ENCODE measurements at regions of chr3 and their contacts with region 1.

Region 1: GRCh38 chr3:52291508-52292181 is 4.0 kb downstream of the GLYCTK start:
- DNase-seq: no peak
- ATAC-seq: no peak
- H3K4me3 ChIP-seq: peak overlapping the region; percentile 78 to 97 (median 85); a peak in 5 of 6 replicates
- H3K27ac ChIP-seq: no peak overlapping the region
- H3K4me1 ChIP-seq: peaks cover 42% of the 10 kb centered on the region
- H3K27me3 ChIP-seq: no peaks in the 10 kb centered on the region; a peak in 1 of 5 replicates
- CTCF ChIP-seq: peak; percentile 93
- EP300 ChIP-seq: no peak
- POLR2A ChIP-seq: no peak
- RAD21 ChIP-seq: peak; percentile 86

Region 2: DNA sequence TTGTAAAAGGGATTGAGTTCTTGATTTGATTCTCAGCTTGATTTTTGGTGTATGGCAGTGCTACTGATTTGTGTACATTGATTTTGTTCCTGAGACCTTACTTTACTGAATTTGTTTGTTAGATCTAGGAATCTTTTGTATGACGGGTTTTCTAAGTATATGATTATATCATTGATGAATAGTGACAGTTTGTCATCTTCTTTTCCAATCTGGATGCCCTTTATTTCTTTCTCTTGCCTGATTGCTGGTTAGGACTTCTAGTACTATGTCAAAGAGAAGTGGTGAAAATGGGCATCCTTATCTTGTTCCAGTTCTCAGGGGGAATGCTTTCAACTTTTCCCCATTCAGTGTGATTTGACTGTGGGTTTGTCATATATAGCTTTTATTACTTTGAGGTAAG is 1514.0 kb before region 1 on chr3:
- CTCF ChIA-PET with region 1: no interaction called
- POLR2A ChIA-PET with region 1: no interaction called
- in situ Hi-C with region 1: no loop called
- intact Hi-C with region 1: no loop called
- DNase-seq: no peak
- ATAC-seq: no peak
- H3K4me3 ChIP-seq: no peak overlapping the region
- H3K27ac ChIP-seq: no peak overlapping the region
- H3K4me1 ChIP-seq: no peaks in the 10 kb centered on the region
- H3K27me3 ChIP-seq: no peaks in the 10 kb centered on the region; a peak in 1 of 5 replicates
- CTCF ChIP-seq: no peak
- EP300 ChIP-seq: no peak
- POLR2A ChIP-seq: no peak
- RAD21 ChIP-seq: no peak

Region 3: GRCh38 chr3:51941798-51942602 is 349.6 kb before region 1 on chr3 and contains the starts of genes PARP3 and RRP9:
- CTCF ChIA-PET with region 1: no interaction called
- POLR2A ChIA-PET with region 1: no interaction called
- in situ Hi-C with region 1: no loop called
- intact Hi-C with region 1: no loop called
- DNase-seq: peak; percentile 99
- ATAC-seq: peak; percentile 88
- H3K4me3 ChIP-seq: peak within 1 kb of the TSS; percentile 80 to 88 (median 84)
- H3K27ac ChIP-seq: peak within 1 kb of the TSS; percentile 93
- H3K4me1 ChIP-seq: peaks cover 33% of the 10 kb centered on the region
- H3K27me3 ChIP-seq: no peaks in the 10 kb centered on the region; a peak in 1 of 5 replicates
- CTCF ChIP-seq: peak; percentile 100
- EP300 ChIP-seq: peak in 1 of 2 experiments; percentile 20; a peak in 1 of 4 replicates
- POLR2A ChIP-seq: peak in 1 of 2 experiments; percentile 45; a peak in 1 of 4 replicates
- RAD21 ChIP-seq: peak; percentile 99
- total RNA-seq, gene PARP3: 7.7 and 11.2 TPM in 2 replicates
- total RNA-seq, gene RRP9: 39.4 and 44.0 TPM in 2 replicates

Region 4: GRCh38 chr3:52220380-52221026 is 71.1 kb before region 1 on chr3:
- CTCF ChIA-PET with region 1: no interaction called
- POLR2A ChIA-PET with region 1: interaction called, 10 read pairs
- in situ Hi-C with region 1: no loop called
- intact Hi-C with region 1: loop called (anchors 2 kb)
- DNase-seq: peak; percentile 49
- ATAC-seq: peak; percentile 78
- H3K4me3 ChIP-seq: peak overlapping the region in 1 of 3 experiments; percentile 6; a peak in 1 of 6 replicates
- H3K27ac ChIP-seq: no peak overlapping the region
- H3K4me1 ChIP-seq: peaks cover 45% of the 10 kb centered on the region
- H3K27me3 ChIP-seq: peaks cover 1 to 12% of the 10 kb centered on the region in 2 experiments; a peak in 4 of 5 replicates
- CTCF ChIP-seq: peak; percentile 94
- EP300 ChIP-seq: no peak
- POLR2A ChIP-seq: no peak
- RAD21 ChIP-seq: peak; percentile 73

Region 5: DNA sequence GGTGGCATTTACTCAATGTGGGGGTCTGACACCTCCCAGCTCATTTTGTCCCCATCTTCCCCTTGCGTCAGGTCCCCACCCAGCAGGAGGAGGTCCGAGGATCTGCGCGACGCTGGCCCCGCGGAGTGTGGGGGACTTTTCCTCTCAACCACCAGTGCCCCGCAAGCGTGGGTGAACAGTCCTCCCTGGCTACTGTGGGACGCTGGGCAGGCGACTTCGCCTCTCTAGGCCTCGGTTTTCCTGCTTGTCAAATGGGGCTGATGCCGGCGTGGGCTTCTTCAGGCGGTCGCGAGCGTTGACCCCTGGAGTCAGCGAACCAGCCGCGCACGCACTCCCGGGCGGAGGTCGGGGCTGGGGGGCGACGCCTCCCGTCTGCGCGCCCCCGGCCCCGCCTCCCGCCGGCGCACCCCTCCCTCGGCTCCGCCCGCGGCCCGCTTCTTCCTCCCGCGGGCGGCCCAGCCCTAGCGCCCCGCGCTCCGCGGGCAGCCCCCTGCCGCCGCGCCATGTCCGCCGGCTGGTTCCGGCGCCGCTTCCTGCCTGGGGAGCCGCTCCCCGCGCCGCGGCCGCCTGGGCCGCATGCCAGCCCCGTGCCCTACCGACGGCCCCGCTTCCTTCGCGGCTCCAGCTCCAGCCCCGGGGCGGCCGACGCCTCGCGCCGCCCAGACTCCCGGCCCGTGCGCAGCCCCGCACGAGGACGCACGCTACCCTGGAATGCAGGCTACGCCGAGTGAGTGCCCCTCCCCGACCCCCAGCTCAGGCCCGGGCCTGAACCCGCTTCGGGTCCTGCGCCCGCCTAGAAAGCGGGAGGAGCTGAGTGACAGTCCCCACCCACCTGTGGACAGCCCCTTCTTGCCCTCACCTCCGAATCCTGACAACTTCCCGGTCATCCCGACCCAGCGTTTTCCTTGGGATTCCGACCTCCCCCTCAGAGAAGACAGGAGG is 46.1 kb before region 1 on chr3 and contains the start of gene PPM1M:
- CTCF ChIA-PET with region 1: no interaction called
- POLR2A ChIA-PET with region 1: interaction called, 18 read pairs
- in situ Hi-C with region 1: no loop called
- intact Hi-C with region 1: no loop called
- DNase-seq: no peak
- ATAC-seq: peak; percentile 41
- H3K4me3 ChIP-seq: peak within 1 kb of the TSS; percentile 44 to 62 (median 49); a peak in 5 of 6 replicates
- H3K27ac ChIP-seq: no peak within 1 kb of the TSS
- H3K4me1 ChIP-seq: peaks cover 42% of the 10 kb centered on the region
- H3K27me3 ChIP-seq: no peaks in the 10 kb centered on the region
- CTCF ChIP-seq: no peak
- EP300 ChIP-seq: no peak
- POLR2A ChIP-seq: no peak
- RAD21 ChIP-seq: no peak
- total RNA-seq, gene PPM1M: 1.5 and 2.5 TPM in 2 replicates

Region 6: GRCh38 chr3:52262447-52262846 is 29.2 kb before region 1 on chr3:
- CTCF ChIA-PET with region 1: no interaction called
- POLR2A ChIA-PET with region 1: no interaction called
- in situ Hi-C with region 1: no loop called
- intact Hi-C with region 1: no loop called
- DNase-seq: no peak
- ATAC-seq: no peak
- H3K4me3 ChIP-seq: no peak overlapping the region
- H3K27ac ChIP-seq: no peak overlapping the region
- H3K4me1 ChIP-seq: no peaks in the 10 kb centered on the region
- H3K27me3 ChIP-seq: no peaks in the 10 kb centered on the region
- CTCF ChIP-seq: no peak
- EP300 ChIP-seq: no peak
- POLR2A ChIP-seq: no peak
- RAD21 ChIP-seq: no peak

Region 7: GRCh38 chr3:52278510-52279069 is 13.1 kb before region 1 on chr3 and contains the start of gene WDR82:
- CTCF ChIA-PET with region 1: no interaction called
- POLR2A ChIA-PET with region 1: interaction called, 165 read pairs
- in situ Hi-C with region 1: no loop called
- intact Hi-C with region 1: no loop called
- DNase-seq: peak; percentile 78
- ATAC-seq: peak; percentile 89
- H3K4me3 ChIP-seq: peak within 1 kb of the TSS; percentile 77 to 99 (median 94)
- H3K27ac ChIP-seq: peak within 1 kb of the TSS; percentile 95
- H3K4me1 ChIP-seq: peaks cover 74% of the 10 kb centered on the region
- H3K27me3 ChIP-seq: no peaks in the 10 kb centered on the region; a peak in 1 of 5 replicates
- CTCF ChIP-seq: peak; percentile 65
- EP300 ChIP-seq: no peak
- POLR2A ChIP-seq: peak; percentile 84 to 93
- RAD21 ChIP-seq: peak; percentile 9; the same call in 1 of the 2 replicates
- total RNA-seq, gene WDR82: 59.5 and 62.0 TPM in 2 replicates

Region 8: DNA sequence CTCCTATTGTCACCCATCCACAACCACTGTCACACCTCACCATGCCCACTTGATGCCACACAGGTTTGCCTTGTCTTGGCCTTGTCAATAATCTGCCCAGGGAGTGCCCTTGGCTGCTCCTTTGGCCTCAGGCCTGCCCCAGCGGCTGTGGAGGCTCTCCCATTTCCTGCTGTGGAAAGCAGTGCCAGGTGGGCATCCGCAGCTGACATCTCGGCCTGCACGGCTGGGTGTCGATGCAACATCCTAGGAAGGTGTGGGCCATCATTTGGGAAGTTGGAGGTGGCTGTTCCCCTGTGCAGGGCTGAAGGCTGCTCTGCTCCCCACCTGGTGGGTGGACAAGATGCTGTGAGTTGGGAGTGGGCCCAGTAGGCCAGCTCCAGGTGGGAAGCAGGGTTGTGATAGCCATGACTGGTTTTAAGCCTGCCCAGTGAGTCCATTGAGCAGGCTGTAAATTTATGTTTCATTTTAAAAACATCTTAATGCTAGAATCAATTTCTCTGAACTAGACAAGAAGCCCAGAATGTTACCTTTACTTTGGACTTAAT is 37.0 kb after region 1 on chr3:
- CTCF ChIA-PET with region 1: no interaction called
- POLR2A ChIA-PET with region 1: interaction called, 10 read pairs
- in situ Hi-C with region 1: no loop called
- intact Hi-C with region 1: no loop called
- DNase-seq: no peak
- ATAC-seq: no peak
- H3K4me3 ChIP-seq: no peak overlapping the region
- H3K27ac ChIP-seq: no peak overlapping the region
- H3K4me1 ChIP-seq: peaks cover 32% of the 10 kb centered on the region
- H3K27me3 ChIP-seq: no peaks in the 10 kb centered on the region
- CTCF ChIP-seq: no peak
- EP300 ChIP-seq: no peak
- POLR2A ChIP-seq: no peak
- RAD21 ChIP-seq: no peak

Region 9: DNA sequence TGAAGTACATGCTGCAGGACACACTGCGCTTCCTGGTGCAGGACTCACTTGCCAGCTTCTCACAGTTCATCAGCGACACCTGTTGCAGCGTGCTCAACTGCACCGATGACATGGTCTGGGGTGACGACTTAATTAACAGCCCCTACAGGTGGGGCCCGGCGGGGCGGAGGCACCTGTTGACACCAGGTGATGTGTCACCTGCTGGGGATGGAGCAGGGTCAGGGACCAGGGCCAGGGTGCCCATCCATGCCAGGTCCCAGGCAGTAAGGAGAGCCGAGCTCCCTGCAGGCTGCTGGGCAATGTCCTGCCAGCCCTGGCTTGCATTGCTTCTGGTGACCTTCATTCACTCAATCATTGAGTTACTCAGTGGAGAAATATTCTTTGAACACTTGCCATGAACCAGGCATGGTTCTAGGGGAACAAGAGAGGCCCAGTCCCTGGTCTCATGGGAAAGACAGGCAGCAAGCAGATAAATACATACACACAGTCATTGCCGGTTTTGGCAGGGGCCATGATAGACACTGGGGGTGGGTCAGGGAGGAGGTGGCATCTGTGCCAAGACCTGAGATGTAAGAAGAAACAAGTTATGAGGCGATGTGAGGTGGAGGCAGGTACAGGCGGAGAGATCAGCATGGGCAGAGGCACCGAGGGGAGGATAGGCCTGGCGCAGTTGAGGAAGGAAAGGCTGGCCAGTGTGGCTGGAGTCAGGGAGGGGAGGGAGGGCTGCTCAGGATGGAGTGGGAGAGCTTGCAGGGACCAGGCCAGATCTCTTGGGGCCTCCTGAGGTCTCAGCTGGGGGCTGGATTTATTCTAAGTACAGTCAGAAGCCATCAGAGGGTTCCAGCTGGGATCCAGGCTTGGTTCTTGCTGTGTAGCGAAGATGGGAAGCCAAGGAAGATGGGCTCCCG is 55.2 kb after region 1 on chr3:
- CTCF ChIA-PET with region 1: no interaction called
- POLR2A ChIA-PET with region 1: interaction called, 4 read pairs
- in situ Hi-C with region 1: loop called (anchors 5 kb)
- intact Hi-C with region 1: no loop called
- DNase-seq: no peak
- ATAC-seq: no peak
- H3K4me3 ChIP-seq: no peak overlapping the region
- H3K27ac ChIP-seq: no peak overlapping the region
- H3K4me1 ChIP-seq: no peaks in the 10 kb centered on the region
- H3K27me3 ChIP-seq: no peaks in the 10 kb centered on the region
- CTCF ChIP-seq: no peak
- EP300 ChIP-seq: no peak
- POLR2A ChIP-seq: no peak
- RAD21 ChIP-seq: no peak

Region 10: DNA sequence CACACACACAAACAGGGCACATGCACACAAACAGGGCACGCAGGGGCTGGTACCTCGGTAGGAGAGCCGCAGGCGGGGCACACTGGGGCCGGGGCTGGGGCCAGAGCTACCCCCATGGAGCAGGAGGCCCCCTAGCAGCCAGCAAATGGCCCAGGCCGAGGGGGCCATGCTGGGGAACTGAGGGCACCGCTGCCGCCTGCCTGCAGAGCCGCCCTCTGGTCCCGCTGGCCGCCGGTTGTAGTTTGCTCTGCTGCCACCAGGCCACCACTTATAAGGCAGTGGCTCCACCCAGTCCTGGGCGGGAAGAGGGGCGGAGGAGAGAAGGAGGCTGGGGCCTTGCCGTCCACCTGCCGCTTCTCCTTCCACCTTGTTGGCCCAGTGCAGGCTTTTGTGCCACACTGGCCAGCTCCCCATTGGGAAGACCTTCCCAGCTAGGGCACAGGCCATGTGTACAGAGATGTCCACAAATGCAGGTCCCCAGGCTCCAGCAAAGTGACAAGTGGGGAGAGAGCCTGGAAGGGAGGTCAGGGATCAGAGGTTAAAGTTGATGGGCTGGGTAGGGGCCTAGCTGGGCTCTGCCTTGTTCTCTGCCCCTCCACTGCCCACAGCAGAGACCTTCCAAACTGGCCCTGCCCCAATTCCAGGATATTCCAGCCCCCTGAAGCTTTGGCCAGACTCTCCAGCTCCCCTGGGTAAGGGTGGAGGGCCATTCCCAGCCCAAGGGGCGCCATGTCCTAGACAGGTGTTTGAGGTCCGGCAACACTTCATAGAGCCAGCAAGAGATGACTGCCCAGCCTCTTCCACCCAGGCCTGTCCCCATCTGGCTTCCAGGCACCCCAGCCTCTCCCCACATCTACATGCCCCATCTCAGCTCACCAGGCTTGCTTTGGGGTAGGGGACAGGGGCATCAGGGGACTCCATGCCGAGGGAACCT is 153.5 kb after region 1 on chr3 and contains the start of gene SEMA3G:
- CTCF ChIA-PET with region 1: no interaction called
- POLR2A ChIA-PET with region 1: interaction called, 7 read pairs
- in situ Hi-C with region 1: no loop called
- intact Hi-C with region 1: loop called (anchors 2 kb)
- DNase-seq: peak; percentile 76
- ATAC-seq: peak; percentile 92
- H3K4me3 ChIP-seq: peak within 1 kb of the TSS; percentile 52 to 79 (median 78)
- H3K27ac ChIP-seq: peak within 1 kb of the TSS; percentile 31
- H3K4me1 ChIP-seq: peaks cover 78% of the 10 kb centered on the region
- H3K27me3 ChIP-seq: no peaks in the 10 kb centered on the region
- CTCF ChIP-seq: peak; percentile 68
- EP300 ChIP-seq: no peak
- POLR2A ChIP-seq: peak in 1 of 2 experiments; percentile 88; a peak in 2 of 4 replicates
- RAD21 ChIP-seq: peak; percentile 40; the same call in 1 of the 2 replicates
- total RNA-seq, gene SEMA3G: 2.0 and 6.1 TPM in 2 replicates

Region 11: DNA sequence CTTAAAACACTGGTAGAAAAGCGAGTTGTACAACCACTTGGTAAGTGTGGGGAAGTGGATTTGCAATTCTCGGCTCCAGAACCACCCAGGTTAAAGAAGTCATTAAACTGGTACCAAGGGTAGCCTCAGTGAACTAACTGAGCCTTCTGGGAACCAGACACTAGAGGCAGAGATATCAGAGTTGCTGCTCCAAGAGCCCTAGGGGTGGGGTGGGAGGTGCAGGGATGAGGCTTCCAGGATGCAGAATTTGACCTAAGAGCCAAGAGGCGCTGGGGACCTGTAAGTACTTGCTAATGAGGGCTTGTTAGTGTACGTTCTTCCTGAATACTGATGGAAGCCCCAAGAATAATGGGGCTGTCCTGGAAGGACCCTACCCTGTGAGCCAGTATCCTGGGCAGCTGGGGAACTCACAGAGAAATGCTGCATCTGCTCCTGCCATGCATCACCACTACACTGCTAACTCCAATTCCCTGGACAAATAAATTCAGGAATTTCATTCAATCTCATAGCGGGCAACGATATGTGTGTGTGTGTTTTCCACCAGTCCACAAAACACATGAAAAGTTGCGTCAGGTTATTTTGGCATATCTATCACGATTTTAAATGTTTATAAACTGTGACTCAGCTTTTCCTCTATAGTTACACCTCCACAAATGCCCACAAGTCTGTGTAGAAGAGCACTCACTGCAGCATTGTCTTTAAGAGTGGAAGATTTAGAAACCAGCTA is 582.0 kb after region 1 on chr3:
- CTCF ChIA-PET with region 1: no interaction called
- POLR2A ChIA-PET with region 1: no interaction called
- in situ Hi-C with region 1: no loop called
- intact Hi-C with region 1: no loop called
- DNase-seq: no peak
- ATAC-seq: no peak
- H3K4me3 ChIP-seq: no peak overlapping the region
- H3K27ac ChIP-seq: no peak overlapping the region
- H3K4me1 ChIP-seq: peaks cover 36% of the 10 kb centered on the region
- H3K27me3 ChIP-seq: no peaks in the 10 kb centered on the region
- CTCF ChIP-seq: no peak
- EP300 ChIP-seq: no peak
- POLR2A ChIP-seq: no peak
- RAD21 ChIP-seq: no peak